Panc1 (cell line): ENCODE measurements at regions of chr9 and their contacts with region 1.

Region 1: GRCh38 chr9:8030095-8030494 is 230.5 kb upstream of the DMAC1 start:
- DNase-seq: no peak
- ATAC-seq: no peak
- H3K4me3 ChIP-seq: no peak overlapping the region
- H3K27ac ChIP-seq: no peak overlapping the region
- H3K4me1 ChIP-seq: no peaks in the 10 kb centered on the region
- H3K27me3 ChIP-seq: no peaks in the 10 kb centered on the region
- CTCF ChIP-seq: no peak

Region 2: DNA sequence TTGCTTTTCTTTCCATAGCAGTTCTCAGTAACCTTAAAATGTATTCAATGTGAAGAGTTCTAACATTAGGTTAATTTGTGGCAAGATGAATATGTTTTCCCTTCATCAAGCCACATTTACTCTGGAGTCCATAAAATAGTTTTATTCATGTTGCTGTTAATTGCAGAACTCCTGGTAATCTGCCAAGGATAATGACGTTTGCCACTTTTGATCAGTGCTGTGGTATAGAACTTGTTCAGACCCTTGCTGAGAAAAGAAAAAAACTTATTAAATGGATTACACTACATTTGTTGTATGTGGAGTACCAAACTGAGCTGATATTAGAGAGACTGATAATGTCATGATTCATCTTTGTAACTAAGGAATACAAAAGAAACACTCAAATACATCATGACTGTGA is 18.1 kb before region 1 on chr9:
- CTCF ChIA-PET with region 1: no interaction called
- POLR2A ChIA-PET with region 1: interaction called, 10 read pairs
- in situ Hi-C with region 1: no loop called
- intact Hi-C with region 1: no loop called
- DNase-seq: no peak
- ATAC-seq: no peak
- H3K4me3 ChIP-seq: no peak overlapping the region
- H3K27ac ChIP-seq: no peak overlapping the region
- H3K4me1 ChIP-seq: no peaks in the 10 kb centered on the region
- H3K27me3 ChIP-seq: no peaks in the 10 kb centered on the region
- CTCF ChIP-seq: no peak